Activated B cell treated with CpG ODN at 0.5 μM for 24 hours (primary cell): ENCODE measurements at regions of chr10 and their contacts with region 1.

Region 1: DNA sequence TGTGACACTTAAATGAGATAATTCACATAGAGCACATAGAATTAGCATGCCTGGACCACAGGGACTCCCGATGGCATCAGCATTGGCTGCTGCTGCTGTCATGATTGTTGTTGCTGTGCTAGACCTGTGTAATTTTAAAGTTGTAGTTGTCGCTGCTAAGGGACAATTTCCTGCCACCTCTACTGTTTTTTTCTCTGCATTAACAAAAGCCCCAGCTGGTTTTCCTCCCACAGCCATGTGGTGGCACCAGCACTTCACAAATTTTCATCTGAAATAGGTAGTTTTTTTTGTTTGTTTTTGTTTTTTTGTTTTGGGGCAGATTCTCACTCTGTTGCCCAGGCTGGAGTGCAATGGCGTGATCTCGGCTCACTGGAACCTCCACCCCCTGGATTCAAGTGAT is 25.4 kb upstream of the PRXL2A start:
- DNase-seq: no peak
- ATAC-seq: peak; percentile 40
- H3K4me3 Mint-ChIP-seq: no peak overlapping the region
- H3K27ac Mint-ChIP-seq: no peak overlapping the region
- H3K4me1 Mint-ChIP-seq: peaks cover 7% of the 10 kb centered on the region
- H3K27me3 Mint-ChIP-seq: peaks cover 6% of the 10 kb centered on the region
- CTCF ChIP-seq: no peak

Region 2: GRCh38 chr10:80444646-80445319 is 61.8 kb after region 1 on chr10:
- CTCF ChIA-PET with region 1: interaction called, 6 read pairs
- POLR2A ChIA-PET with region 1: no interaction called
- intact Hi-C with region 1: loop called (anchors 2 kb)
- DNase-seq: no peak
- ATAC-seq: peak; percentile 89
- H3K4me3 Mint-ChIP-seq: no peak overlapping the region
- H3K27ac Mint-ChIP-seq: peak overlapping the region; percentile 24
- H3K4me1 Mint-ChIP-seq: peaks cover 7% of the 10 kb centered on the region
- H3K27me3 Mint-ChIP-seq: no peaks in the 10 kb centered on the region
- CTCF ChIP-seq: no peak

Region 3: DNA sequence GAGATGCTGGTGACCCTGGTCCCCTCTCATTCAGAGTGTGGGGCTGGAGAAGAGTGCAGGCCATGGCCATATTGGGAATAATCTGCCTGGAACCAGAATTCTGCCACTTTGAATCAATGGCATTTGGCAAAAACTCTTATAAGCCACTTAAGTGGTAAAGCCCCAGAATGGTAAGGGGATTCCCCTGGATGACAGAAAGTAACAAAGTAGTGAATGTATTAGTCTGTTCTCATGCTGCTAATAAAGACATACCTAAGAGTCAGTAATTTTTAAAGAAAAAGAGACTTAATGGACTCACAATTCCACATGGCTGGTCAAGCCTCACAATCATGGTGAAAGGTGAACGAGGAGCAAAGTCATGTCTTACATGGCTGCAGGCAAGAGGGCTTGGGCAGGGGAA is 403.3 kb after region 1 on chr10:
- CTCF ChIA-PET with region 1: no interaction called
- POLR2A ChIA-PET with region 1: no interaction called
- intact Hi-C with region 1: no loop called
- DNase-seq: no peak
- ATAC-seq: no peak
- H3K4me3 Mint-ChIP-seq: no peak overlapping the region
- H3K27ac Mint-ChIP-seq: no peak overlapping the region
- H3K4me1 Mint-ChIP-seq: no peaks in the 10 kb centered on the region
- H3K27me3 Mint-ChIP-seq: no peaks in the 10 kb centered on the region
- CTCF ChIP-seq: no peak

Region 4: DNA sequence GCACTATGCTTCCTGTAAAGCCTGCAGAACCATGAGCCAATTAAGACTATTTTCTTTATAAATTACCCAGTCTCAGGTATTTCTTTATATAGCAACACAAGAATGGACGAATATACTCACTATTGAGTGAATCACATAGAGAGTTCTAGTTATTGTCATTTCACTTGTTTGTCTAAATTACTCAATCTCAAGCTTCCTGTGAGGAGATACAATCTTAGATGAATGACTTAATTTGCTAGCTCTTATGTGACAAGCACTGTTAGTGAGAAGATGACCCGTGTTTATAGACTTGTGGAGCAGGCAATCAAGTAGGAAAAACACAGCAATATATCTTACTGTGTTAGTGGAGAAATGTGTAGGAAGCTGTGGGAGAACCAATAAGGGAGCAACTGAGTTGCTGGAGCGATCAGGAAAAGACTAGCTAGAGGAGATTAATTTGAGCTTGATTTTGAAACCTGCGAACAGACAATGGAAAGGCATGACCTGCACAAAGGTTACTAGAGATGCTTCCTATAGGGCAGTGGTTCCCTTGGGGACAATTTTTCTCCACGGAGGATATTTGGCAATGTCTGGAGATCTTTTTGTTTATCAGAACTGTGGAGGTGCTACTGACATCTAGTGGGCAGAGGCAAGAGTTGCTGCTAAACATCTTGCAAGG is 635.8 kb after region 1 on chr10:
- CTCF ChIA-PET with region 1: no interaction called
- POLR2A ChIA-PET with region 1: no interaction called
- intact Hi-C with region 1: loop called (anchors 1 kb)
- DNase-seq: no peak
- ATAC-seq: peak; percentile 25
- H3K4me3 Mint-ChIP-seq: no peak overlapping the region
- H3K27ac Mint-ChIP-seq: no peak overlapping the region
- H3K4me1 Mint-ChIP-seq: no peaks in the 10 kb centered on the region
- H3K27me3 Mint-ChIP-seq: peaks cover 2% of the 10 kb centered on the region
- CTCF ChIP-seq: no peak